ENCODE measurements at regions of chr2 and their contacts with region 1.

Region 1: DNA sequence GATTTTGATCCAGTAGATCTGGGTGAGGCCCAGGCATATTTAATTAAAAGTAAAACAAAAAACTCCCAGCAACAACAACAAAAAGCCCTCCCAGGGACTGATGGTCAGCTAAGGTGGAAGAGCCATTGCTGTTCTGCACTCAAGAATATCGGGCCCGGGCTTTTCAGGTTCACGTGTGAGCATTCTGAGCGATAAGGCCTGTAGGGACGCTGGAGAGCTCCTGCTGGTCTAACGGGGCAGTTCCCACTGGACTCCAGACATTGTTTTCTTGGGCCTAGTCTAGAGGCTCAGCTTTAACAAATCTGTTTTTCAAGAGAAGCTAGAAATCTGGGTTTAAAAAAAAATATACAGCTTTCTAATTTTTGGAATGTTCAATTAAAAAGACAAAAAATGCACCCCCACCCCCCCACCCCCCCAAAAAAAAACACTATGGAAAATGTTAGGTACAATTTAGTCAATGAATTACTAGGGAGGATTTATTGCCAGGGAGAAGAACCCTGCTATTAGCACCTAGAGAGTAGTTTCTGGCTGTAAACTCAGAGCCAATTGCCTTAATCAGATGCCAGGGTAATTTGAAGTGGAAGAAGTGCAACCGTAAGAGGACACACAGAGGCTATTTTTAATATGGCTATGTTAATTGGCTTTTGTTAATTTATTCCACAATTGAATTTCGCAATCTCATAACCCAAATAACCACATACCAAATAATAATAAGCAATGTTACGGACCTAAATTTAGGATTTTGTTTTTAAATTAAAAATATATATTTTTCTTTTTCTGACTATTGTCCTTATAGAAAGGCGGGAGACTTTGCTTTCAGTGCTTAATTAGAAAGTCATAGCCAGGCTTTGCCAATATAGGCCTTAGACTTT is 78.9 kb downstream of the MAP4K4 start:
- DNase-seq: no peak
- ATAC-seq: no peak
- H3K4me3 ChIP-seq: no peak overlapping the region
- H3K4me3 Mint-ChIP-seq: no peak overlapping the region
- H3K27ac ChIP-seq: no peak overlapping the region
- H3K27ac Mint-ChIP-seq: no peak overlapping the region
- H3K4me1 ChIP-seq: peaks cover 47 to 55% of the 10 kb centered on the region in 2 experiments
- H3K4me1 Mint-ChIP-seq: peaks cover 88 to 96% (median 94%) of the 10 kb centered on the region in 3 donors
- H3K27me3 ChIP-seq: no peaks in the 10 kb centered on the region
- H3K27me3 Mint-ChIP-seq: no peaks in the 10 kb centered on the region

Region 2: GRCh38 chr2:101725515-101726192 is 50.8 kb before region 1 on chr2:
- CTCF ChIA-PET with region 1: no interaction called
- POLR2A ChIA-PET with region 1: interaction called in 1 of 2 experiments, 10 read pairs
- DNase-seq: peak in 14 of 35 experiments; percentile 17 to 65 (median 30)
- ATAC-seq: no peak
- H3K4me3 ChIP-seq: no peak overlapping the region
- H3K4me3 Mint-ChIP-seq: peak overlapping the region in 1 of 3 donors; percentile 23
- H3K27ac ChIP-seq: no peak overlapping the region
- H3K27ac Mint-ChIP-seq: peak overlapping the region; percentile 4 to 55
- H3K4me1 ChIP-seq: peaks cover 44 to 74% of the 10 kb centered on the region in 2 experiments
- H3K4me1 Mint-ChIP-seq: peaks cover 97 to 100% (median 97%) of the 10 kb centered on the region in 3 donors
- H3K27me3 ChIP-seq: no peaks in the 10 kb centered on the region
- H3K27me3 Mint-ChIP-seq: no peaks in the 10 kb centered on the region

Region 3: DNA sequence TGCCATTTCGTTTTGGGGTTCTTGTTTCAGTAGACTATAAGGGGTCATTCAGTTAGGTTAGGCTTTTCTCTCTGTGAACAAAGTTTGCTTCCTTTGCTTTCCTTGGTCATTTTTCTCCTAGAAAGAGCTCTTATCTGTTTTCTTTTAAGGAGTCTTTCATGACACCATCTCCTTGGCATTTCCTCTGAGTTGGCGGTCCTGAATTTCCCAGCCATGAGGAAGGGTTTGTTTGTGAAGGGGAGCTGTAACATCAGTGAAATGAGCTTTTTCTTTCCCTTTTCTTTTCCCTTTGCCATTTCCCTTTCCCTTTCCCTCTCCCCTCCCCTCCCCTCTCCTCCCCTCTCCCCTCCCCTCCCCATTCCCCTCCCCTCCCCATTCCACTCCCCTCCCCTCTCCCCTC is 17.2 kb before region 1 on chr2:
- CTCF ChIA-PET with region 1: interaction called in 1 of 2 experiments, 6 read pairs
- POLR2A ChIA-PET with region 1: interaction called, 5 to 18 read pairs
- DNase-seq: no peak
- ATAC-seq: no peak
- H3K4me3 ChIP-seq: no peak overlapping the region
- H3K4me3 Mint-ChIP-seq: no peak overlapping the region
- H3K27ac ChIP-seq: no peak overlapping the region
- H3K27ac Mint-ChIP-seq: no peak overlapping the region
- H3K4me1 ChIP-seq: peaks cover 16 to 43% of the 10 kb centered on the region in 2 experiments
- H3K4me1 Mint-ChIP-seq: peaks cover 69 to 84% (median 77%) of the 10 kb centered on the region in 3 donors
- H3K27me3 ChIP-seq: no peaks in the 10 kb centered on the region
- H3K27me3 Mint-ChIP-seq: no peaks in the 10 kb centered on the region

Measured in T-cell (primary cell).